Activated T-helper 2 cell treated with anti-CD3 and anti-CD28 coated beads, Interferon-gamma antibody, Interleukin-2, Interleukin-4, amounts not matched to agents 10 μg/mL and 5 μg/mL and 100 μg/mL, durations not matched to agents 14 hours and 24 hours and 36 hours (primary cell): ENCODE measurements at regions of chr3 and their contacts with region 1.

Region 1: DNA sequence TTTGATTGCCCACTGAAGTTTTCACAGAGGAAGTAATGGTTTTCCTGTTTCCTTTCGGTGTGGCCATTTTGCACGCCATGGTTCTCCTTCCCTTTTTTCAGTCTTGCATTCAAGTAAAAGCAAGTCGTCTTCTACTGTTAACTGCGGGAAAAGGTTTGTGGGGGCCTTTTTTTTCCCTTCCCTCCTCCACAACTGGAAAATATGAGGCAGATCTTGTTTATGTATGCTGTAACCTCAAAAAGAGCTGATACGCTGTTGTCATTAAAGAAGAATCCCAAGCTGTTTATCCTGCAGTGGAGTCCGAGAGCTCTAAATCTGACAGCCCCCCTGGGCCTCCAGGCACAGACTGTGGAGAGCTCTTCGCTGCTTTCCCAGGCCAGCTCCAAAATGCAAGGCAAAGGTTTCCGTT is 40.4 kb downstream of the FILIP1L start:
- DNase-seq: no peak
- H3K4me3 Mint-ChIP-seq: peak overlapping the region; percentile 58
- H3K27ac Mint-ChIP-seq: peak overlapping the region; percentile 90
- H3K4me1 Mint-ChIP-seq: peaks cover 72% of the 10 kb centered on the region
- H3K27me3 Mint-ChIP-seq: no peaks in the 10 kb centered on the region

Region 2: DNA sequence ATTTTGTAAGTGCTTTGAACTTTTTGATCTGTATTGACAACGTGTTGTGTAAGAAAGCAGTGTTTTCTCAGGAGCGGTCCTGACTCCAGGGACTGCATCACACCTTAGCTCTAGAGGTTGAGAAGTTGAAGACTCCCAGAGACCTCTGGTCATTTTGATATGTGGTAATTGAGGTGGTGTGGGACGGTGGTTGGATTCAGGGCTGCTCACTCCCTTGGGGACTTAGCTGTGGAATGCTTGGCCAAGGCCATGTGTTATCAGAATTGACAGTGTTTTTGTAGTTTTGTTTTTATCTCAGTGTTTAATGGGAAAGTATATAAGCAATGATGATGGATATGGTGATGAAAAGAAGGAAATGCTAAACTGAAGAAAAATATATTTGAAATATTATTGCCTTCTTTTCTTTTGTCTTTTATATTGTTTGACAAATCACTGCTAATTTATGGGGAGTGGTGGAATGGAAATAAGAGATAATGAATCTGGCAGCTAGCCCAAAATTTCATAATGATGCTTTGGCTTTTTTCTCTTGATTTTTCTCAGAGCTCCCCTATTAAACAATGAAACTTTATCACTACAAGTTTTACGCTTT is 240.2 kb before region 1 on chr3:
- intact Hi-C with region 1: loop called (anchors 5 kb)
- DNase-seq: no peak
- H3K4me3 Mint-ChIP-seq: no peak overlapping the region
- H3K27ac Mint-ChIP-seq: no peak overlapping the region
- H3K4me1 Mint-ChIP-seq: peaks cover 26% of the 10 kb centered on the region
- H3K27me3 Mint-ChIP-seq: no peaks in the 10 kb centered on the region

Region 3: GRCh38 chr3:100144251-100144866 is 70.5 kb after region 1 on chr3:
- intact Hi-C with region 1: loop called (anchors 5 kb)
- DNase-seq: no peak
- H3K4me3 Mint-ChIP-seq: no peak overlapping the region
- H3K27ac Mint-ChIP-seq: no peak overlapping the region
- H3K4me1 Mint-ChIP-seq: peaks cover 15% of the 10 kb centered on the region
- H3K27me3 Mint-ChIP-seq: no peaks in the 10 kb centered on the region